Activated CD8-positive, alpha-beta T cell treated with anti-CD3 and anti-CD28 coated beads for 36 hours (primary cell): ENCODE measurements at regions of chr11 and their contacts with region 1.

Region 1: GRCh38 chr11:62805076-62805892 is at the start of gene NXF1:
- DNase-seq: peak; percentile 95
- ATAC-seq: peak; percentile 85
- H3K4me3 Mint-ChIP-seq: peak within 1 kb of the TSS; percentile 95
- H3K27ac Mint-ChIP-seq: peak within 1 kb of the TSS; percentile 98
- H3K4me1 Mint-ChIP-seq: peaks cover 38% of the 10 kb centered on the region
- H3K27me3 Mint-ChIP-seq: no peaks in the 10 kb centered on the region
- CTCF ChIP-seq: peak; percentile 31
- total RNA-seq, gene NXF1: 80.9 to 90.0 TPM

Region 2: GRCh38 chr11:62753736-62754603 is 51.3 kb before region 1 on chr11 and contains the start of gene ZBTB3:
- CTCF ChIA-PET with region 1: no interaction called
- POLR2A ChIA-PET with region 1: interaction called, 15 read pairs
- intact Hi-C with region 1: no loop called
- DNase-seq: peak; percentile 99
- ATAC-seq: peak; percentile 97
- H3K4me3 Mint-ChIP-seq: peak within 1 kb of the TSS; percentile 99
- H3K27ac Mint-ChIP-seq: peak within 1 kb of the TSS; percentile 99
- H3K4me1 Mint-ChIP-seq: peaks cover 26% of the 10 kb centered on the region
- H3K27me3 Mint-ChIP-seq: no peaks in the 10 kb centered on the region
- CTCF ChIP-seq: no peak
- total RNA-seq, gene ZBTB3: 9.8 to 11.8 TPM

Region 3: DNA sequence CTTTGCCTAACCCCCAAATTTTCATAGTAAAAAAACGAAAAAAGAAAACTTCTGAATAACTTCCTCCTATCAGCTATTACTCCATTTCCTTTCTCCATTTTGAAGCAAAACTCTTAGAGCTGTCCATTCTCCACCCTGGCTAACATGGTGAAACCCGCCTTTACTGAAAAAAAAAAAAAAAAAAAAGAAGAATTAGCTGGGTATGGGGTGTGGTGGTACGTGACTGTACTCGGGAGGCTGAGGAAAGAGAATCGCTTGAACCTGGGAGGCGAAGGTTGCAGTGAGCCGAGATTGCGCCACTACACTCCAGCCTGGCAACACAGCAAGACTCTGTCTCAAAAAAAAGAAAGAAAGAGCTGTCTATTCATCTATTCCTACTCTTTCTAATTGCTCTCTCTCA is 11.3 kb after region 1 on chr11:
- CTCF ChIA-PET with region 1: interaction called, 6 read pairs
- POLR2A ChIA-PET with region 1: interaction called, 11 read pairs
- intact Hi-C with region 1: no loop called
- DNase-seq: no peak
- ATAC-seq: no peak
- H3K4me3 Mint-ChIP-seq: no peak overlapping the region
- H3K27ac Mint-ChIP-seq: no peak overlapping the region
- H3K4me1 Mint-ChIP-seq: peaks cover 2% of the 10 kb centered on the region
- H3K27me3 Mint-ChIP-seq: no peaks in the 10 kb centered on the region
- CTCF ChIP-seq: no peak

Region 4: GRCh38 chr11:62823677-62824076 is 18.4 kb after region 1 on chr11:
- CTCF ChIA-PET with region 1: interaction called, 11 read pairs
- POLR2A ChIA-PET with region 1: interaction called, 28 read pairs
- intact Hi-C with region 1: no loop called
- DNase-seq: no peak
- ATAC-seq: no peak
- H3K4me3 Mint-ChIP-seq: no peak overlapping the region
- H3K27ac Mint-ChIP-seq: no peak overlapping the region
- H3K4me1 Mint-ChIP-seq: peaks cover 7% of the 10 kb centered on the region
- H3K27me3 Mint-ChIP-seq: no peaks in the 10 kb centered on the region
- CTCF ChIP-seq: no peak

Region 5: GRCh38 chr11:62831520-62832335 is 26.4 kb after region 1 on chr11 and contains the start of gene STX5:
- CTCF ChIA-PET with region 1: interaction called, 11 read pairs
- POLR2A ChIA-PET with region 1: interaction called, 28 read pairs
- intact Hi-C with region 1: no loop called
- DNase-seq: peak; percentile 100
- ATAC-seq: peak; percentile 95
- H3K4me3 Mint-ChIP-seq: peak within 1 kb of the TSS; percentile 88
- H3K27ac Mint-ChIP-seq: peak within 1 kb of the TSS; percentile 95
- H3K4me1 Mint-ChIP-seq: peaks cover 47% of the 10 kb centered on the region
- H3K27me3 Mint-ChIP-seq: no peaks in the 10 kb centered on the region
- CTCF ChIP-seq: no peak
- total RNA-seq, gene STX5: 22.0 to 22.8 TPM

Region 6: DNA sequence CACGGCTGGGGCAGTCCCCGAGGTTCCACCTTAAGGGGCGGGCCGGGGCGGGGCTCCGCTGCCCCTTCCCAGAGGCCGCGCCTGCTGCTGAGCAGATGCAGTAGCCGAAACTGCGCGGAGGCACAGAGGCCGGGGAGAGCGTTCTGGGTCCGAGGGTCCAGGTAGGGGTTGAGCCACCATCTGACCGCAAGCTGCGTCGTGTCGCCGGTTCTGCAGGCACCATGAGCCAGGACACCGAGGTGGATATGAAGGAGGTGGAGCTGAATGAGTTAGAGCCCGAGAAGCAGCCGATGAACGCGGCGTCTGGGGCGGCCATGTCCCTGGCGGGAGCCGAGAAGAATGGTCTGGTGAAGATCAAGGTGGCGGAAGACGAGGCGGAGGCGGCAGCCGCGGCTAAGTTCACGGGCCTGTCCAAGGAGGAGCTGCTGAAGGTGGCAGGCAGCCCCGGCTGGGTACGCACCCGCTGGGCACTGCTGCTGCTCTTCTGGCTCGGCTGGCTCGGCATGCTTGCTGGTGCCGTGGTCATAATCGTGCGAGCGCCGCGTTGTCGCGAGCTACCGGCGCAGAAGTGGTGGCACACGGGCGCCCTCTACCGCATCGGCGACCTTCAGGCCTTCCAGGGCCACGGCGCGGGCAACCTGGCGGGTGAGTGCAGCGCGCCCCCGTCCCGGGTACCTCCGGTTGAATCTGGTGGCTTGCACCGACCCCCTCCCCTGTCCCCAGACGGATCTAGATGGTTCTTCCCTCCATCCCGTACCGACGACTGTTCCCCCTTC is 75.7 kb after region 1 on chr11 and contains the start of gene SLC3A2:
- CTCF ChIA-PET with region 1: no interaction called
- POLR2A ChIA-PET with region 1: interaction called, 13 read pairs
- intact Hi-C with region 1: no loop called
- DNase-seq: peak; percentile 91
- ATAC-seq: peak; percentile 76
- H3K4me3 Mint-ChIP-seq: peak within 1 kb of the TSS; percentile 99
- H3K27ac Mint-ChIP-seq: peak within 1 kb of the TSS; percentile 100
- H3K4me1 Mint-ChIP-seq: peaks cover 41% of the 10 kb centered on the region
- H3K27me3 Mint-ChIP-seq: no peaks in the 10 kb centered on the region
- CTCF ChIP-seq: peak; percentile 71
- total RNA-seq, gene SLC3A2: 299 to 315 TPM

Region 7: GRCh38 chr11:62961017-62961570 is 155.8 kb after region 1 on chr11:
- CTCF ChIA-PET with region 1: no interaction called
- POLR2A ChIA-PET with region 1: no interaction called
- intact Hi-C with region 1: no loop called
- DNase-seq: no peak
- ATAC-seq: no peak
- H3K4me3 Mint-ChIP-seq: no peak overlapping the region
- H3K27ac Mint-ChIP-seq: no peak overlapping the region
- H3K4me1 Mint-ChIP-seq: no peaks in the 10 kb centered on the region
- H3K27me3 Mint-ChIP-seq: peaks cover 4% of the 10 kb centered on the region
- CTCF ChIP-seq: no peak